AG04450 (cell line): ENCODE measurements at regions of chr4 and their contacts with region 1.

Region 1: DNA sequence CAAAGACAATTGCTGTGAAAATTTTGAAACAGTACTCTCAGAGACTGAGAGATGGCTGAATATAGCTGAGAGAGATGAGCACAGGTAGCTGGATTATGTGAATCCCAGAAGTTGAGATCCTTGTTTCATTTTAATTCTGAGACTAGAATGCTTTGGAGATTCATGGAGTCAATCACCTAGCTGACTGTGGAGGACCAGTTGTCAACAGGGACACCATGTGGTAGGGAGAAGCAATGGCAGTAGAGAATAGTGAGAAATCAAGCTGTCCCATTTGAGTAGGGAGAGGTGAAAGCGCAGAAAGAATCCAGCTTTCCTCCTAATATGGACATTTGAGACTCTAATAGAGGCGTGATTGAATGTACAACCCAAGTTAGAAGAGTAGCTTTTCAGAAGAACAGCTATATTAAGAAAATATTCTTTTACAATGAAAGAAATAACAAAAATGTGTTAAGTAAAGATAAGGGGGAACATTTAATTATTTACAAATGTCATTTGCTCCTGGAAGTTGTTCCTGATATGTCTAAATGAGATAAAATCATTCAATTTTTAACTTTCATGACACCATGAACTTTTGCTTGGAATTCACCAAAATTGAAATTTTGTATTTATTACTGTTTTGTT is 30.3 kb upstream of the GLRB start:
- DNase-seq: peak; percentile 61
- H3K4me3 ChIP-seq: no peak overlapping the region
- H3K27ac ChIP-seq: no peak overlapping the region
- H3K27me3 ChIP-seq: no peaks in the 10 kb centered on the region
- CTCF ChIP-seq: peak; percentile 89

Region 2: GRCh38 chr4:156475322-156475721 is 570.3 kb before region 1 on chr4:
- CTCF ChIA-PET with region 1: interaction called, 42 read pairs
- POLR2A ChIA-PET with region 1: no interaction called
- DNase-seq: peak; percentile 4
- H3K4me3 ChIP-seq: no peak overlapping the region
- H3K27ac ChIP-seq: no peak overlapping the region
- H3K27me3 ChIP-seq: no peaks in the 10 kb centered on the region
- CTCF ChIP-seq: peak; percentile 44

Region 3: GRCh38 chr4:156968479-156968984 is 77.1 kb before region 1 on chr4:
- CTCF ChIA-PET with region 1: interaction called, 53 read pairs
- POLR2A ChIA-PET with region 1: interaction called, 6 read pairs
- DNase-seq: no peak
- H3K4me3 ChIP-seq: peak overlapping the region; percentile 94
- H3K27ac ChIP-seq: peak overlapping the region; percentile 13
- H3K27me3 ChIP-seq: no peaks in the 10 kb centered on the region
- CTCF ChIP-seq: peak; percentile 87

Region 4: DNA sequence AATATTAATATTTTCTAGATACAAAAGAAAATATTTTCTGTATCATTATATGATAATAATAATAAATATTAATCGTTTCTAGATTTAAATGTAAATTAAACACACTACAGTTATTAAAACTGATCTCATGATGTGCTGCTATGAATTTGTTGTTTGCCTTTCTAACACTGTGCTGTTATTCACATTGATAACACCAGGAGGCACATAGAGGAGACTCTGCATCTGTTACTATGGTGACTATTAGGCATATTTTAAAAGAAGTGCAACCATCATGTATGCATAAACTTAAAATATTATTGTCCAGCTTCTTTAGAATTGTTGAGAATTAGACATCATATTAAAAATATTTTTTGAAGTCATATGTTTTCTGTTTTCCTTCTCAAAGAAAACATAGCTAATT is 62.3 kb before region 1 on chr4:
- CTCF ChIA-PET with region 1: interaction called, 43 read pairs
- POLR2A ChIA-PET with region 1: no interaction called
- DNase-seq: no peak
- H3K4me3 ChIP-seq: no peak overlapping the region
- H3K27ac ChIP-seq: no peak overlapping the region
- H3K27me3 ChIP-seq: no peaks in the 10 kb centered on the region
- CTCF ChIP-seq: peak; percentile 71

Region 5: DNA sequence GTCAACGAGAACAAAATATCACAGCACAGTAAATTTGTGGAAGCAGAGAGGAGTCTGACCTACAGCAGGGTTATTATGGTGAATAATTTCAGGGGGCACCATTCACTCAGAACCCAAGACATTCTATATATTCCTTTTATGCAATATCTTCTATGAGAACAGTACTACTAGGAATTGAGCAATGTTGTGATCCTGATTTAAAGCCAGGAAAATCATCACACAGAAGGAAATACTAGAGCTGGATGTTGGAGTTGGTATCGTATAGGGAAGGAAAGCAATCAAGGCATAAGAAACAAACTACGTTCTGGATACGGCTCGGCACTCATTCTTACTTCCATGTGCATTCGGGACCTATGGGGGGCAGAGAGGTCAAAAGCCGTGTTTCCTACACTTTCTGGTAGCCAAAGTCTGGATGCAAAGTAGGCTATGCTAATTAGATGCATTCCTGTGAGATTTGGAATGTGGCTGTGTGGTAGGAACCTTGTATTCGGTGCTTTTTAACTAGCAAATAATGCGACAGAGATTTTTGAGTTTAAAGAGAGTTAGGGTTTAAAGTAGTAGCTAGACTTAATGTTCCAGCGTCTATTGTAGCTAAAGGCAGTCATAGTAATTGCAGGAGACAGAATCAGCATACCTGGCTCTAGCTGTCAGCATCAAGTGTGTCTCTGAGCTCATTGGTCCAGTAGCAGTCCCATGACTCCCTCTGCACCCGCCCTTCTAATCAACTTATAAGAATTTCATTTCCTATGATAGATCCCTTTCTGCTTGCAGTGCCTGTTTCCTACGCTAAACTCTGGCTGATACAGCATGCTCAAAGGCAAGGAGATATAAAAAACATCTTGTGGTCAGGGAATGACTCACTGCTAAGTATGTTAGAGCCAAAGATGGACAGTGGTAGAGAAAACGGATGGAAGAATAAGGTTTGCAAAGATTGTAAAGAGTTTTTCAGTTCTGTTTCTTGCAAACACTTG is 30.7 kb before region 1 on chr4:
- CTCF ChIA-PET with region 1: interaction called, 14 read pairs
- POLR2A ChIA-PET with region 1: no interaction called
- DNase-seq: peak; percentile 73
- H3K4me3 ChIP-seq: no peak overlapping the region
- H3K27ac ChIP-seq: peak overlapping the region; percentile 66
- H3K27me3 ChIP-seq: no peaks in the 10 kb centered on the region
- CTCF ChIP-seq: 0 out of 2 replicates have a peak, but pooled peaks have one; percentile 14

Region 6: DNA sequence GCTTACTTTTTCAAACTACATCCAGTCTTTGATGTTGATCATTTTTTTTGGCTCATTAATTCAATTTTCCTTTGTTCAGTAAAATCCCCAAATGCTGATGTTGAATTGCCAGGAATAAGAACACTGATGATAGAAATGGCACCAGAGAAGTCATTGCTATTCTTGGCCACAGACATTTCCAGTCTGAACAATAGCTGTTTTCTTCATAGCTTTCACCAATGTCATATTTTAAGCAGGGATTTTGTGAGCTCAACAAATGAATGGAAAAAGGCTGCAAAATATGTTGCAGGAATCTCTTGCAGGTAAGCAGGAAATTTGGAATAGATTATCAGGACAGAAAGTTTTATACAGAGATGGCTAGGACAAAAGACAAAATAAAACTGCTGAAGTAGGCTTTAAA is 10.1 kb before region 1 on chr4:
- CTCF ChIA-PET with region 1: interaction called, 22 read pairs
- POLR2A ChIA-PET with region 1: no interaction called
- DNase-seq: no peak
- H3K4me3 ChIP-seq: no peak overlapping the region
- H3K27ac ChIP-seq: no peak overlapping the region
- H3K27me3 ChIP-seq: no peaks in the 10 kb centered on the region
- CTCF ChIP-seq: no peak

Region 7: DNA sequence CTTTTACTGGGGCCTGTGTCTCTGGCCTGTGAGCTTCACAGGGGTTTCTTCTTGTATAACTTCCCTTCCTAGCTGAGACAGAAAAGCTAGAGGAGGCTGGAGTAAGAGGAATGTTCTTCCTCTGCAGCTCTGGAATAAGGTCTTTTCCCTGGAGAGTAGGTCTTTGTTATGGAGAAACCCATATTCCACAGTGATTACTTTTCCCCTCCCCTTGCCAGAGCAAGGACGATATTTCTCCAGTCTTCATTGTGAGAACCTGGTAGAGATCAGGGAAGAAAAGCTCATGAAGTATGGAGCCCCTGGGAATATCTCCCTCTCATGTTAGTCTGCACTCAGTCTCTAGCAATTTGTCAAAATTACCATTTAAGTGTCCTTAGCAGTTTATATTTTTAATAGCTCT is 11.6 kb after region 1 on chr4:
- CTCF ChIA-PET with region 1: interaction called, 34 read pairs
- POLR2A ChIA-PET with region 1: no interaction called
- DNase-seq: no peak
- H3K4me3 ChIP-seq: no peak overlapping the region
- H3K27ac ChIP-seq: no peak overlapping the region
- H3K27me3 ChIP-seq: no peaks in the 10 kb centered on the region
- CTCF ChIP-seq: no peak

Region 8: DNA sequence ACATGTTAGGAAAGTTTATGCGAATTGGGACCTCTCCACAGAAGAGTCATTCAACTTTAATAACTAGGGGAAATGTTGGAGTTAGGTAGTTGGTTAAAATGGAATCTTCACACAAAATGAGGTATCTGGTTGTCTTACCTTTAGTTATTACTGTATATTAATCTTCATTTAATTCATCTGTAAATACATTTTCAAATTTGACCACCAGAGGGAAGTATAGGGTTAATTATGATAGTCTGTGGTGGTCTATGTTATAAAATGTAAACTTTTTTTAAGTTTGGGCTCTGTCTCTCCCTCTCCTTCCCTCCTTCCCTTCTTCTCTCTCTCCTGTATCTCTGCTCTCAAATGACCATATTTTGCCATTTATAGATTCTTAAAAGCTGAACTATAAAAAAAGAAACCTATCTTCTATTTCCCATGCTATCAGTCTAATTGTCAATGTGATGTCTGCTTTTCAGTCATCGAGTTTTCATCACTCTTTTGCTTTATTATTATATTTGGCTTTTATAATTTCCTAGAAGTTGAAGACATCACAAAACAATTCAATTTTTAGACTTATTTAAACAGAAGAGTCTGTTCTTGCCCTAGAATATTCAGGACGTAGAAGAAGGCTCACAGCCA is 1214.4 kb after region 1 on chr4:
- CTCF ChIA-PET with region 1: no interaction called
- POLR2A ChIA-PET with region 1: no interaction called
- DNase-seq: no peak
- H3K4me3 ChIP-seq: no peak overlapping the region
- H3K27ac ChIP-seq: no peak overlapping the region
- H3K27me3 ChIP-seq: no peaks in the 10 kb centered on the region
- CTCF ChIP-seq: peak; percentile 35